Posterior cingulate gyrus (tissue), 11 donors: ENCODE measurements at regions of chr15 and their contacts with region 1.

Region 1: GRCh38 chr15:63610200-63610841 is 13.1 kb downstream of the FBXL22 start:
- DNase-seq: peak in 9 of 10 donors; percentile 48 to 93 (median 74)

Region 2: GRCh38 chr15:63668601-63669000 is 58.3 kb after region 1 on chr15:
- intact Hi-C with region 1: loop called (anchors 10 kb)
- DNase-seq: no peak

Region 3: DNA sequence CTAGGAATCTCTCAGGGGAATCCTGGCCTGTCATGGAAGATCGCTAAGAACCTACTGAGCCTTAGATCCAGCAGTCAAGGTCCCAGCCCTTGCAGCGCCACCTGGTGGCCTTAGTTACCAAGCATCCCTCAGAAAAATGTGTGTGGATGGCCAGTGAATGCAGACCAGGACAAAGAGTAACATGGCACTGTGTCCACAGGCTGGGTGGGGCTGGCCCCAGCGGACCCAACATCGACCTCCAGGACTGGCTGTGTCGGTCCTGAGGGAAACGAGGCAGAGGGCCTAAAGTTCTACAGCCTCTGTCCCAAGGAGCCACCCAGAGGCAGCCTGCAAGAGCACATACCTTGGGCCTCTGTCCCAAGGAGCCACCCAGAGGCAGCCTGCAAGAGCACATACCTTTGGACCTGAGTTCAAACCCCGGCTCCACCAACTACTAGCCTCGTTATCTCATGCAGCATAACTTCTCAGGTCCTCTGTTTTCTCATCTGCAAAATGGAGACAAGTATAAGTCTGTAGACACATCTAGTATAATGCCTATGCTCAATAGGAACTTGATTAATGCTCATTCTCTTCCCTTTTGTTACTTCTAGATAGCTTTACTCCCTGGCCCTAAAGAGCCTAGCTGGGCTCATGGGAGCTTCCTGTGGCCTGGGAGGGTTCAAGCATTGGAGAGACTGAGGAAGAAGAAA is 280.9 kb after region 1 on chr15:
- intact Hi-C with region 1: loop called (anchors 5 kb)
- DNase-seq: peak; percentile 56 to 97 (median 84)

Region 4: GRCh38 chr15:64067564-64068030 is 457.3 kb after region 1 on chr15:
- intact Hi-C with region 1: loop called (anchors 5 kb)
- DNase-seq: peak in 7 of 10 donors; percentile 43 to 89 (median 71)

Region 5: DNA sequence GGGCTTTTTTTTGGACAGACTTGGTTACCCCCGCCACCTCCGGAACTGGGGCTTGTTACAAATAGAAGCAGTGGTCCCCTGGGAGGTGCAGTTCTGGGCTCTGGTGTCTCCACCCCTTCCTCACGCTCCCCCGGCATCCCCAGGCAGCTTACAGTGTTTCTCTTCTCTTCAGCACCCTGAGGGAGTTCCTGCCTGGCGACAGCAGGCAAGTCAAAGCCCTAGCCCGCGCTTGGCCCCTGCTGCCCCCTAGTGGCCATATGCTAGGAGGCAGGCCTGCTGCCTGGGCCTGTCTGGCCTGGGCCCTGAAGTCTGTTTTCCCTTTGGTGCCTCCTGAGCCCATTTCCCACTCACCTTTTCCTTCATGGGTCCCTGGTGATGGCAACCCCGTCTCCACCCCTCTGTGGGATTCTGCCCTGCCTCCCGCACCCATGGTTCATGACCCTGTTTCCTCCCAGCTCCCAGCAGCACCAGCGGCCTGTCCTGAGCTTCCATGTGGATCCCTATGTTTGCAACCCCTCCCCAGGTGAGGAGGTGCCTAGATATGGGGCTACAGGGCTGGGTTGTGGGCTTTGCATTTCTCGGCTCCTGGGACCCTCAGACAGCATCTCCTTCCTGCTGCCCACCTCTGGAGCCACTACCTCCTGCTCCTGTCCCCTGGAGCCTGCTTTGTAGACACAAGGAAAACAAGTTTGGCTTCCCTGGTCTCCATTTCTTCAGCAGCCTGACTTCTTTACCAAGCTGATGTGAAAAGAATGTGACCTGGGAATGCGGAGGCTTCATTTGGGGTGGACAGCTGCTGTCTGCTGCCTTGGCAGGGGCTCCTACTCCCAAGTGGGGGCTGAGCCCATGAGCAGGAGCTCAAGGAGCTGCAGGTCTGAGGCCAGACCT is 543.4 kb after region 1 on chr15:
- intact Hi-C with region 1: loop called (anchors 10 kb)
- DNase-seq: peak; percentile 90 to 99 (median 96)